ENCODE measurements at regions of chr10 and their contacts with region 1.

Region 1: DNA sequence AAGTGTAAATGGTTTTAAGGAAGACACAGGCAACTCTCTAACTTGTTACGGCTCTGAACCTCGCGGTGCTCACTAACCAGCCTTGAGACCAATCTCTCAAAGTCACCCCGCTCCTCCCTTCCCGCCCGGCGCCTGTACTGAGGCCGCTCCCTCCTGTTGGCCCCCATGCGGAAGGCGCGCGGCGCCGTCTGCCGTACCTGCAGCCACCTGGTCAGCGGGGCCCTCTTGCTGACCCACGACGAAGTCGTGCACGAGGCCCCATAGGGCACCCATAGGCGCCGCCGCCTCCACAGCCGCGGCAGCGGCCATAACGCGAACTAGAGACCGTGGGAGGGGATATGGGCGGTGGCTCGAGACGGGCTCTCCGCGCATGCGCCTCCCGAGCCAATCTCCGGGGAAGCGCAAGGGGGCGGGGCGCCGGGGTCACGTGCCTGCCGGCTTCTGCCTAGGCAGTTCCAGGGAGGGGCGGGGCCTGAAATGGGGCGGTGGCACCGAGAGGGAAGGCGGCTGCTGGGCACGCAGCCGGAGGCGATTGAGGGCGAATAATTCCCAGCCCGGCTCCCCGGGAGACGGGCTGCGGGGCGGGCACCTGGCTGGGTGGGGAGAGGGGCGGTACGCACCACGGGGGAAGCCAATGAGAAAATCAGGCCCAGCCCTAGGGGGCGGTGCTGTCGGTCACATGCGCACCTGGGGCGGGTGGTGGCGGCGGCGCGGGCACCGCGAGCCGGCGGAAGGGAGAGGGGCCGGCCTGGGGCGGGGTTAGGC is at the start of gene MMS19:
- DNase-seq: peak; percentile 96 to 97 (median 96)
- H3K4me3 ChIP-seq: peak within 1 kb of the TSS; percentile 67 to 96 (median 95)
- H3K4me3 Mint-ChIP-seq: peak within 1 kb of the TSS; percentile 92 to 97
- H3K27ac ChIP-seq: peak within 1 kb of the TSS; percentile 79 to 90
- H3K27ac Mint-ChIP-seq: peak within 1 kb of the TSS; percentile 88 to 96 (median 94)
- H3K4me1 ChIP-seq: peaks cover 25 to 53% of the 10 kb centered on the region in 2 donors
- H3K4me1 Mint-ChIP-seq: peaks cover 57% of the 10 kb centered on the region
- H3K27me3 ChIP-seq: no peaks in the 10 kb centered on the region
- H3K27me3 Mint-ChIP-seq: peaks cover 0 to 2% (median 0%) of the 10 kb centered on the region in 3 donors
- CTCF ChIP-seq: no peak
- polyA plus RNA-seq, gene MMS19: 23.2 to 74.5 (median 29.2) TPM

Region 2: DNA sequence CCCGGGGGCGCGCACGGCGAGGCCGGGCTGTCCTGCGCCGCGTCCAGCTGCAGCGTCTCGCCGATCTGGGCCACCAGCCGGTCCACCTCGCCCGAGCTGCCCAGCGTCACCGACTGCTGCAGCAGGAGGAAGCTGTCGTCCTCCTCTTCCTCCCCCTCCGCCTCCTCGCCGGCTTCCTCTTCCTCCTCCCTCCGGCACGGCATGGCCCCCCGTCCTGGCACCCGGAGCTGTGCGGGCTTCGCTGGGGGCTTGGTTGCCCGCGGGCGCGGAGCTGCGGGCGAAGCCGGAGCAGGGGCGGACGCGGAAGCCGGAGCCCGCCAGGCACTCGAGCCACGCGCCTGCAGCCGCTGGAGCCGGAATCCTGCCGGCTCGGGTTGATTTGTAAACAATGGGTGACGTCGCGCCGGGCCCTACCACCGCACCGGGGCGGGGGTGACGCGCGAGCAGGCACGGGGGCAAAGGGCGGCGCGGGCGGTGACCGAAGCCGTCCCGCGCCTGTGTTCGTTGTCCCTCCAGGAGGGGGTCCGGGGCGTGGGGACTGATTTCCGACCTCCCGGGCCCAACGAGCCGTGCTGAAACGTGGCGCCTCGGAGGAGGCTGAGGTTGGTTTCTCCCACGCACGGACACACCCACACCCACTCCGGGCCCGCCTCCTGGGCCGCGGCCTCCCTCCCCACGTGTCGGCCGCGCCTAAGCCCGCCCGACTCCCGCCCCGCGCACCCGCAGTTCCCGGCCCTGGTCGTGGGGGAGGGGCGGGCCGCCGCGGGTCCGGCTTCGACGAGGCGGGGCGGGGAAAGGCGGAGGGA is 163.7 kb before region 1 on chr10 and contains the start of gene FRAT2:
- intact Hi-C with region 1: loop called in 1 of 2 experiments (anchors 10 kb)
- DNase-seq: peak; percentile 81 to 92 (median 90)
- H3K4me3 ChIP-seq: peak within 1 kb of the TSS; percentile 87 to 99 (median 90)
- H3K4me3 Mint-ChIP-seq: peak within 1 kb of the TSS; percentile 98 to 99
- H3K27ac ChIP-seq: peak within 1 kb of the TSS; percentile 85 to 92
- H3K27ac Mint-ChIP-seq: peak within 1 kb of the TSS; percentile 95 to 99 (median 97)
- H3K4me1 ChIP-seq: peaks cover 46 to 65% of the 10 kb centered on the region in 2 donors
- H3K4me1 Mint-ChIP-seq: peaks cover 67% of the 10 kb centered on the region
- H3K27me3 ChIP-seq: no peaks in the 10 kb centered on the region
- H3K27me3 Mint-ChIP-seq: peaks cover 0 to 2% (median 0%) of the 10 kb centered on the region in 3 donors
- CTCF ChIP-seq: no peak
- polyA plus RNA-seq, gene FRAT2: 29.4 to 62.4 (median 37.9) TPM

Region 3: GRCh38 chr10:97400665-97401454 is 97.4 kb before region 1 on chr10 and contains the start of gene RRP12:
- intact Hi-C with region 1: loop called (anchors 5 kb)
- DNase-seq: peak; percentile 98 to 100 (median 99)
- H3K4me3 ChIP-seq: peak within 1 kb of the TSS; percentile 73 to 97 (median 85)
- H3K4me3 Mint-ChIP-seq: peak within 1 kb of the TSS; percentile 91 to 94
- H3K27ac ChIP-seq: peak within 1 kb of the TSS; percentile 87 to 98
- H3K27ac Mint-ChIP-seq: peak within 1 kb of the TSS; percentile 97 to 100 (median 98)
- H3K4me1 ChIP-seq: peaks cover 49 to 59% of the 10 kb centered on the region in 2 donors
- H3K4me1 Mint-ChIP-seq: peaks cover 36% of the 10 kb centered on the region
- H3K27me3 ChIP-seq: no peaks in the 10 kb centered on the region
- H3K27me3 Mint-ChIP-seq: peaks cover 0 to 2% (median 0%) of the 10 kb centered on the region in 3 donors
- CTCF ChIP-seq: no peak
- polyA plus RNA-seq, gene RRP12: 31.0 to 98.7 (median 44.3) TPM

Region 4: DNA sequence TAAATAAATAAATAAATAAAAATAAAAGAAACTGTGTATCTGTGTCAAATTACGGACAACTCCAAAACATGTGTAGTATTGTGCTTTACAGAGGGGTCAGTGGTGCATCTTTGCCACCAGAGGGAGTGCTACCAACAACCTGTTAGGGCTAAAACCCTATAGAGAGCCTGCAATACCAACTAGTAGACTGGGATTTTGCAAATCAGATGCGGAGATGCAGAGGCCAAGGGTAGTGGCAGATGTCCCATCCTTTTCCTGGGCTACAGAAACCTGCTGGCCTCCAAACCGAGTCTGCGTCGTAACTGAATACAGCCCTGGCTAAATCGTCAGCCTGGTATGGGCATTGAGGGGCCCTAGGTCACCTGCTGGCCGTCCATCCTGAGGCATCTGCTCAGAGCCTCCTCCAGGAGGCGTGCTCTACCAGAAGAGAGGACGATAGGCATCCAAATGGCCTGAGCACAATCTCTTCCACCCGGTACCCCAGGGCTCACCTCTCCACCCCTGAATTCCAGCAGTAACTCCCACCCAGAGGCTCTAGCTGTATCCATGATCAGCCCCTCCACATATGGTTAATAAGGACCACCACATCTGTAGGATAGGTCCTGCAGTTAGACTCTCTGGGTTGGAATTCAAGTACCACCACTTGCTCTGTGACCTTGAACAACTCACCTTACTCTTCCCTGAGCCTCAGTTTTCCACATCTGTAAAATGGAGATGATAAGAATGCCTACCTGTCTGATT is 90.9 kb before region 1 on chr10:
- intact Hi-C with region 1: loop called (anchors 5 kb)
- DNase-seq: peak; percentile 74 to 80 (median 75)
- H3K4me3 ChIP-seq: peak overlapping the region in 1 of 3 experiments; percentile 31
- H3K4me3 Mint-ChIP-seq: peak overlapping the region; percentile 43 to 71
- H3K27ac ChIP-seq: peak overlapping the region; percentile 85 to 88
- H3K27ac Mint-ChIP-seq: peak overlapping the region; percentile 95 to 99 (median 98)
- H3K4me1 ChIP-seq: peaks cover 75 to 87% of the 10 kb centered on the region in 2 donors
- H3K4me1 Mint-ChIP-seq: peaks cover 67% of the 10 kb centered on the region
- H3K27me3 ChIP-seq: no peaks in the 10 kb centered on the region
- H3K27me3 Mint-ChIP-seq: no peaks in the 10 kb centered on the region
- CTCF ChIP-seq: peak; percentile 84

Region 5: GRCh38 chr10:97445722-97446639 is 52.3 kb before region 1 on chr10 and contains the starts of genes EXOSC1 and ZDHHC16:
- intact Hi-C with region 1: loop called (anchors 5 to 10 kb)
- DNase-seq: peak; percentile 79 to 88 (median 87)
- H3K4me3 ChIP-seq: peak within 1 kb of the TSS; percentile 46 to 99 (median 74)
- H3K4me3 Mint-ChIP-seq: peak within 1 kb of the TSS; percentile 96 to 97
- H3K27ac ChIP-seq: peak within 1 kb of the TSS; percentile 18 to 71
- H3K27ac Mint-ChIP-seq: peak within 1 kb of the TSS; percentile 60 to 94 (median 89)
- H3K4me1 ChIP-seq: peaks cover 19 to 26% of the 10 kb centered on the region in 2 donors
- H3K4me1 Mint-ChIP-seq: peaks cover 34% of the 10 kb centered on the region
- H3K27me3 ChIP-seq: no peaks in the 10 kb centered on the region
- H3K27me3 Mint-ChIP-seq: no peaks in the 10 kb centered on the region
- CTCF ChIP-seq: no peak
- polyA plus RNA-seq, gene EXOSC1: 34.7 to 60.6 (median 55.8) TPM
- polyA plus RNA-seq, gene ZDHHC16: 16.3 to 26.4 (median 24.1) TPM

Region 6: DNA sequence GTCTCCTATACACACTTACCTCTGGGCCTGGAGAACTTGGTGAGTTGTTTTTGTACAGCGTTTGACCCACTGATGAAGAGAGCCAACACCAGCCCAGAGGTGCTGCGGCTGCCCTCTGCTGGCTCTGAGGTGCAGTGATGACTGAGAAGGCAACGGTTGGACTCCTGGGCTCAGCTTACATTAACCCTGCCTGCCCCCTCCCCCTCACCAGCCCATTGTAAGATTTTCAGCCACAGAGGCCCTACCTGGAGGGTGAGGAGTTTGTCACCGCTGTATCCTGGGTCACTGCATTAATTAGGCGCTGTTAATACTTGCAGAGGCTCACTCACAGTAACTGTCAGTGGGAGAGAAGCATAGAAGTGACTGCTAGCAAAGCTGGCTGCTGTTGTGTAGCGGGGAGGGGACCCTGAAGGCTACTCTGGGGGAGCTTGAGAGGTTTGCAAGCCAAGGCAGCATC is 55.3 kb after region 1 on chr10:
- intact Hi-C with region 1: loop called (anchors 5 kb)
- DNase-seq: peak; percentile 37 to 58 (median 49)
- H3K4me3 ChIP-seq: no peak overlapping the region
- H3K4me3 Mint-ChIP-seq: no peak overlapping the region
- H3K27ac ChIP-seq: no peak overlapping the region
- H3K27ac Mint-ChIP-seq: peak overlapping the region in 1 of 7 donors; percentile 45
- H3K4me1 ChIP-seq: no peaks in the 10 kb centered on the region
- H3K4me1 Mint-ChIP-seq: peaks cover 3% of the 10 kb centered on the region
- H3K27me3 ChIP-seq: no peaks in the 10 kb centered on the region
- H3K27me3 Mint-ChIP-seq: no peaks in the 10 kb centered on the region
- CTCF ChIP-seq: peak; percentile 79

Region 7: GRCh38 chr10:97632949-97633884 is 135.0 kb after region 1 on chr10 and contains the start of gene MORN4:
- intact Hi-C with region 1: loop called in 1 of 2 experiments (anchors 5 kb)
- DNase-seq: peak; percentile 88 to 91 (median 90)
- H3K4me3 ChIP-seq: peak within 1 kb of the TSS; percentile 65 to 83 (median 74)
- H3K4me3 Mint-ChIP-seq: peak within 1 kb of the TSS; percentile 95 to 99
- H3K27ac ChIP-seq: no peak within 1 kb of the TSS
- H3K27ac Mint-ChIP-seq: peak within 1 kb of the TSS in 6 of 7 donors; percentile 30 to 82 (median 70)
- H3K4me1 ChIP-seq: peaks cover 11 to 12% of the 10 kb centered on the region in 2 donors
- H3K4me1 Mint-ChIP-seq: peaks cover 15% of the 10 kb centered on the region
- H3K27me3 ChIP-seq: no peaks in the 10 kb centered on the region
- H3K27me3 Mint-ChIP-seq: peaks cover 2 to 5% (median 5%) of the 10 kb centered on the region in 3 donors
- CTCF ChIP-seq: no peak
- polyA plus RNA-seq, gene MORN4: not detected